Left colon (tissue), 2 donors: ENCODE measurements at regions of chr14 and their contacts with region 1.

Region 1: GRCh38 chr14:90301668-90302090 is 30.1 kb downstream of the NRDE2 start:
- DNase-seq: no peak
- ATAC-seq: peak; percentile 69

Region 2: GRCh38 chr14:90697577-90698206 is 396.0 kb after region 1 on chr14:
- intact Hi-C with region 1: loop called in 1 of 2 experiments (anchors 5 kb)
- DNase-seq: peak; percentile 77 to 78
- ATAC-seq: peak; percentile 98

Region 3: DNA sequence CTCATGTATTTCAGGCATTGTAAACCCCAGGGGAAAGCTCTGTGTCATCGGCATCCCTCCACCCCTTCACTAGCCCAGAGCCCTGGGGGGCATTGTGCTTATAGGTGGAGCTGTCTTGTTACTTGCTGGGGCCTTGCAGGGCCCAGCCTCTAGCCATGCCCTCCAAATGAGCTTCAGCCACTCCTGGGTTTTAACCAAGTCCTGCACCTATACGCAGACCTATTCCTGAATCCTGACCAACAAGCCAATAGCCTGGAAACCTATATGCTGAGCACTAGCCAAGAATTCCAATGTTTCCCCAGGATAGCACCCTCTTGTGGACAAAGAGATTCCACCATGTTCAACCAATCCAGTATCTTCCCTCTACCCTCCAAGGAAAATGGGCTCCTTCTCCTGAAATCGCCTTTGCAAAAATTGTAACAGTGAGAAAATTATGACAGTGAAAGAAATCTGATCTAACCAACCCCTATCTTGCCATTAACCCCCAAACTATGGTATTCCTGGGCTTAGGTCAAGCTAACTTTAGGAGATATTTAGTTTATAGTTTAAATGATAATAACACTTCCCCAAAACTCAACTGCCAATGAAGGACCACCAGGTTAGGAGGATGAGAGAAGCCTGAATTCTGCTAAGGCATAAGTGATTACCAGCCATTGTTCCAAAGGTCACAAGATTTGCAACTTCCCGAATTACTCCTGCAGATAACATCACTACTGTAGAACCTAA is 459.1 kb after region 1 on chr14:
- intact Hi-C with region 1: loop called in 1 of 2 experiments (anchors 10 kb)
- DNase-seq: no peak
- ATAC-seq: peak; percentile 21